PC-9 (cell line): ENCODE measurements at regions of chr20 and their contacts with region 1.

Region 1: GRCh38 chr20:21971436-21971835 is 266.0 kb downstream of the PAX1 start:
- DNase-seq: no peak
- H3K4me3 ChIP-seq: no peak overlapping the region
- H3K27ac ChIP-seq: no peak overlapping the region
- H3K4me1 ChIP-seq: no peaks in the 10 kb centered on the region
- H3K27me3 ChIP-seq: no peaks in the 10 kb centered on the region
- CTCF ChIP-seq: no peak

Region 2: GRCh38 chr20:21436205-21436604 is 535.2 kb before region 1 on chr20:
- CTCF ChIA-PET with region 1: no interaction called
- POLR2A ChIA-PET with region 1: no interaction called
- intact Hi-C with region 1: loop called (anchors 10 kb)
- DNase-seq: peak in 1 of 2 experiments; percentile 46
- H3K4me3 ChIP-seq: no peak overlapping the region
- H3K27ac ChIP-seq: no peak overlapping the region
- H3K4me1 ChIP-seq: no peaks in the 10 kb centered on the region
- H3K27me3 ChIP-seq: peaks cover 48% of the 10 kb centered on the region
- CTCF ChIP-seq: no peak

Region 3: GRCh38 chr20:21921251-21921650 is 50.2 kb before region 1 on chr20:
- CTCF ChIA-PET with region 1: no interaction called
- POLR2A ChIA-PET with region 1: no interaction called
- intact Hi-C with region 1: no loop called
- DNase-seq: no peak
- H3K4me3 ChIP-seq: no peak overlapping the region
- H3K27ac ChIP-seq: no peak overlapping the region
- H3K4me1 ChIP-seq: no peaks in the 10 kb centered on the region
- H3K27me3 ChIP-seq: no peaks in the 10 kb centered on the region; the same call in 1 of the 2 replicates
- CTCF ChIP-seq: no peak

Region 4: DNA sequence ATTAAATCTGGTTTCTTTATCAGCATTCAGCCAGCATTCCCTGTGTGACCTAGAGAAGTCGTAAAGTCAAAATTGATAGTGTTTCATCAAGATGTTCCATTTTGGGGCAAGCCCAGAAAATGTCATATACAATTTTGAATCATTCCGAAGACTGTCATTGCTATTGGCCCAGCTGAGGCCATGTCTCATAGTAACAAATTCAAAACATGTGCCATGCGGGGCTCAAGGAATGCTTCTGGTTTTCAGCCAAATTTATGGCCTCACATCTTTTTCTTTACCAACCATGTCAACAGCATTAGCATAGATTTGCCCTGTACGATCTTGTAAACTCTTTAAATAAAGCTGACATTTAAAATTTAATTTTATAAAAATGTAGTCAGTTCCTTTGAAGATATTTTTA is 48.8 kb after region 1 on chr20:
- CTCF ChIA-PET with region 1: no interaction called
- POLR2A ChIA-PET with region 1: no interaction called
- intact Hi-C with region 1: no loop called
- DNase-seq: no peak
- H3K4me3 ChIP-seq: no peak overlapping the region
- H3K27ac ChIP-seq: no peak overlapping the region
- H3K4me1 ChIP-seq: no peaks in the 10 kb centered on the region
- H3K27me3 ChIP-seq: peaks cover 11% of the 10 kb centered on the region; the same call in 1 of the 2 replicates
- CTCF ChIP-seq: no peak

Region 5: GRCh38 chr20:22160253-22160652 is 188.8 kb after region 1 on chr20:
- CTCF ChIA-PET with region 1: no interaction called
- POLR2A ChIA-PET with region 1: no interaction called
- intact Hi-C with region 1: no loop called
- DNase-seq: no peak
- H3K4me3 ChIP-seq: no peak overlapping the region
- H3K27ac ChIP-seq: no peak overlapping the region
- H3K4me1 ChIP-seq: no peaks in the 10 kb centered on the region
- H3K27me3 ChIP-seq: peaks cover 66% of the 10 kb centered on the region
- CTCF ChIP-seq: no peak